AG04450 (cell line): ENCODE measurements at regions of chr2 and their contacts with region 1.

Region 1: DNA sequence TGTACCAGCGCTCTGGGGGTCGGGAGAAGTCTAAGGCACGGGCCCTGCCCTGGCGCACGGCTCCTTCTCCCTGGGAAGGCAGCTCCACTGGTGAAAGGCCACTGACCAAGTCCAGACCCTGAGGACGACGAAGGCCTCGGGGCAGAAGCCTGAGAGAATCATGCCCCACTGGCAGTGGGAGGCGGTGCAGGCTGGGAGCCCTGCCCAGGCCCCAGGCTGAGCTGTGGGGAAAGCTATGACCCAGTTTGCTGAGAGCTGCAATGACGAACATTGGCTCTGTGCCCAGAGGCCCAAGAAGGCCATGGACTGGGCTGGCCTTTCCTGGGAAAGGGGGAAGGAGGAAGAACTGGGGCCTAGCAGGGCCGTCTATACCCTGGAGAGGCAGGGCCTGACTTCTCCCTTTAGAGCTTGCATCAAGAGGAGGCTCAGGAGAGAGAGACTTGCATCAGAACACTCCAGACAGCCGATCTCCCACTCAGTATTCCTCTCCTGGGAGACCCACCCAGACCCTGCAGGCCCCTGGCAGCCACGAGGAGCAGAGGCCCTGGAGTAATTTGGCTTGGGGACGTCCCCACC is 32.9 kb downstream of the HS1BP3 start:
- DNase-seq: peak; percentile 98
- H3K4me3 ChIP-seq: no peak overlapping the region
- H3K27ac ChIP-seq: peak overlapping the region; percentile 94
- H3K27me3 ChIP-seq: no peaks in the 10 kb centered on the region
- CTCF ChIP-seq: peak; percentile 61

Region 2: GRCh38 chr2:20595431-20596192 is 22.4 kb before region 1 on chr2:
- CTCF ChIA-PET with region 1: interaction called, 4 read pairs
- POLR2A ChIA-PET with region 1: interaction called, 11 read pairs
- DNase-seq: no peak
- H3K4me3 ChIP-seq: no peak overlapping the region
- H3K27ac ChIP-seq: peak overlapping the region; percentile 33
- H3K27me3 ChIP-seq: no peaks in the 10 kb centered on the region
- CTCF ChIP-seq: no peak

Region 3: GRCh38 chr2:20604951-20605381 is 13.0 kb before region 1 on chr2:
- CTCF ChIA-PET with region 1: interaction called, 12 read pairs
- POLR2A ChIA-PET with region 1: no interaction called
- DNase-seq: peak; percentile 60
- H3K4me3 ChIP-seq: no peak overlapping the region
- H3K27ac ChIP-seq: peak overlapping the region; percentile 33
- H3K27me3 ChIP-seq: no peaks in the 10 kb centered on the region
- CTCF ChIP-seq: no peak

Region 4: GRCh38 chr2:20657522-20658235 is 39.7 kb after region 1 on chr2:
- CTCF ChIA-PET with region 1: no interaction called
- POLR2A ChIA-PET with region 1: no interaction called
- DNase-seq: no peak
- H3K4me3 ChIP-seq: no peak overlapping the region
- H3K27ac ChIP-seq: no peak overlapping the region
- H3K27me3 ChIP-seq: peaks cover 52% of the 10 kb centered on the region
- CTCF ChIP-seq: no peak

Region 5: DNA sequence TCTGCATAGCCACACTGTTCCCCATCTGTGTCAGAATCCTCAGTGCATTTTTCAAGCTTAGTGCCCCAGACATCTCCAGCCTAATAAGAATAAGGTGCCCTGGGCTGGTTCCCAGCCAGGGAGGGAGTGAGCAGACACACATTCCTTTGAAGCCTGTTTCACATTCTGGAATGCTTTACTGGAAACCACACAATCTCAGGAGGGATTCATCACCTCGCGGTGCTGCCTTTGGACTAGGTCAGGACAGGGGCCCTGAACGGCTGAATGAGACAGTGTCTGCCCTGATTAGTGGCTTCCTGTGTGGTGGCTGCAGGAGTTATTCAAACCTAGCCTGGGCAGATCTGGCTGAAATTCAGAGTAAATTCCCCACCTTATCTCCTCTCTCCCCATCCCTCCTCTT is 312.9 kb after region 1 on chr2:
- CTCF ChIA-PET with region 1: no interaction called
- POLR2A ChIA-PET with region 1: no interaction called
- DNase-seq: no peak
- H3K4me3 ChIP-seq: no peak overlapping the region
- H3K27ac ChIP-seq: peak overlapping the region; percentile 11
- H3K27me3 ChIP-seq: peaks cover 2% of the 10 kb centered on the region
- CTCF ChIP-seq: no peak